ENCODE measurements at regions of chr1 and their contacts with region 1.

Region 1: DNA sequence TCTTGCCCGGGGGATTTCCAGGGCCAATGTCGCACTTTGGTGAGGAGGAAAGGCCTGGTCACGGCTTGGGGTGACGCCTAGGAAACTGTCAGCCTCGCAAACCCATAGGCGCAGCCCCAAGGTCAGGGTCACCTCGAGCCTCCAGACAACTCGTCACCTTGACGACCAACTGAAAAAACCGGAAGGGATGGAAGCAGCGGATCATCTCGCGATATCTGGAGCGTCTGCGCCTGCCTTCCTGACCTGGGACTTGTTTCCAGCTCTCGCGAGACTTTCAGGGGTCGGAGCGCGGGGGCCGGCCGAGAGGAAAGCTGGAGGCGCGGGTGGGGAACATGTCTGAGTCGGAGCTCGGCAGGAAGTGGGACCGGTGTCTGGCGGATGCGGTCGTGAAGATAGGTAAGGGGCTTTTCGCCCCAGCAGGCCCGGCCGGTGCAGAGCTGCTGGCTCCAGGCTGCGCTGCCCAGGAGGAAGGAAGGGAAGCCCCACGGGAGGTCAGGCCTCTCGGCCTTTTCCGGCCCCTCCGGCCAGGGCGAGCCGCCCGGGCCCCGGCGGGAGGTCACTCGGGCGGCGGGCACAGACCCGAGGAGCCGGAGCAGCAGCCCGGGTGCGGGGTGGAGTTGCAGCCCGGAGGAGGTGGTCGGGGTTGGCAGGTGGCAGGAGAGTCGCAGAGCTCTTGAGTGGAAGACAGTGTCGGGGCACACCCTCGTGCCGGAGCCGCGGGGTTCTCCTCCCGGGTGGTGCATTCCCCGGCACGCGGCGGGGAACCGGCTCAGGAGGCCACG is 47.2 kb upstream of the NBL1 start:
- DNase-seq: peak; percentile 92 to 100 (median 96)
- ATAC-seq: peak; percentile 69
- H3K4me3 ChIP-seq: peak overlapping the region; percentile 67 to 76
- H3K4me3 Mint-ChIP-seq: peak overlapping the region; percentile 92
- H3K27ac ChIP-seq: peak overlapping the region; percentile 96 to 99
- H3K27ac Mint-ChIP-seq: peak overlapping the region; percentile 100
- H3K4me1 ChIP-seq: peaks cover 50% of the 10 kb centered on the region
- H3K4me1 Mint-ChIP-seq: peaks cover 48% of the 10 kb centered on the region
- H3K27me3 ChIP-seq: no peaks in the 10 kb centered on the region
- H3K27me3 Mint-ChIP-seq: no peaks in the 10 kb centered on the region
- CTCF ChIP-seq: no peak

Region 2: DNA sequence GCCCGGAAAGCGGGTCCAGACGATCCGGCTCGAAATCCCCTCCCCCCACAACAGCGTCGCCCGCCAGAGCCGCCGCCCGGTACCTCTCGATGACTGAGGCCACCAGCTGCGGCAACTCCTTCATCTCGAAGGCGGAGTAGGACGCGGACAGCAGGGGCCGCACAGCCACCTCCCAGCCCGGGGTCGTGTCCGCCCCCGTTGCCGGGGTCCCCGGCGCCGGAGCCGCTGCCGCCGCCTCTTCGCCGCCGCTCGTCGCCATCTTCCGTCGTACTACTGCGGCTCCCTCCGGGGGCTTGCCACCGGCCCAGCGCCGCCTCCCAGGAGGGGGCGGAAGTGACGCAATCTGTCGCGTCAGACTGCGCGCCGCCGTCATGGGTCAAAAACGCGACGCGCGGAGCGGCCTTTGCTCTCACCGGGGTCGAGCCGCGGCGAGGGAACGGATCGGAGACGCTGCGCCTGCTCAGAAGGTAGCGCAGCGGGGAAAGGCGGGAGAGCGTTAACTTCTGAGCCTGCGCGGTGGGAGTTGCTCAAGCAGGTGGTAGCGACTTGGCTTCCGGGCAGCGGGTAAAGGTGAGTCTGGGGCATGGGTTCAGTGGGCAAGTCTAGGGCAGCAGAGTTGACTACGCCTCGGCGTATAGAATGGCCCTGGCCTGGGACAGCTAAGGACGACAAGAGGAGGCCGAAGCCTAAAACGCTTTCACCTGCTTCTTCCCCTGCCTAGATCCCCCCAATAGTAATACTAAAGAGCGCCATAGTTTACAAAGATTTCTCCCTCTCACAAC is 386.7 kb before region 1 on chr1 and contains the start of gene UBR4:
- CTCF ChIA-PET with region 1: no interaction called
- POLR2A ChIA-PET with region 1: no interaction called
- intact Hi-C with region 1: loop called (anchors 1 kb)
- DNase-seq: peak; percentile 91 to 99 (median 97)
- ATAC-seq: peak; percentile 93
- H3K4me3 ChIP-seq: peak within 1 kb of the TSS; percentile 73 to 96
- H3K4me3 Mint-ChIP-seq: peak within 1 kb of the TSS; percentile 96
- H3K27ac ChIP-seq: peak within 1 kb of the TSS; percentile 86 to 96
- H3K27ac Mint-ChIP-seq: peak within 1 kb of the TSS; percentile 99
- H3K4me1 ChIP-seq: peaks cover 48% of the 10 kb centered on the region
- H3K4me1 Mint-ChIP-seq: peaks cover 76% of the 10 kb centered on the region
- H3K27me3 ChIP-seq: no peaks in the 10 kb centered on the region
- H3K27me3 Mint-ChIP-seq: no peaks in the 10 kb centered on the region
- CTCF ChIP-seq: no peak
- total RNA-seq, gene UBR4: 146 to 148 TPM

Region 3: DNA sequence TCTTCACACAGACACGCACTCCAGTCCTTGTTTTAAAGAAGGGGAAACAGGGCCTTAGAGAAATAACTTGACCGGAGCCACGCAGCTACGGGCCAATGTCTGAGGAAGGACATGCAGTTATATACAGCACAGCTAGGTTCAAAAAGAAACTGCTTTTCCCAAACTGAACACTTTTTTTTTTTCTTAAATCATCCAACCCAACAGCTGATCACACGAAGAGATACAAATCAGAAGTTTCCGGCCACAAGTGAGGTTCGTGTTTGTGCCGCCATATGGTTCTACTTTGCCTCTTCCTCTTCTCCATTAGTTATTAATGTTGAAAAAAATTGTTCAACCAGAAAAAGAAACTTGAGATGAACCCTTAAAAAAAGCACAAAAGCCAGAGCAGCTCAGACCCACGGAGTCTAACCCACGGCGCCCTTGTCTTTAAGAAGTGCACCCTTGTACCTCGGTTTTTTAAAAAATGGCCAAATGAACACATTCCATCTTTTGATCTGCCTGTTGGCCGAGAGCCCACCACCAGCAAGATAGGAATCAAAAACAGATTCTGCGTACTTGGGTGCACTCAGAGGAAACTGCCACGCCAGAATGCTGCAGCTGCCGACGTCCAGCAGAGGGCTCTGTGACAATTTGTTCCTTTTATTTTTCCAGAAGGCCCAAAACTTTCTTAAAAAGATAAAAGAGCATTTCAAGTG is 205.9 kb before region 1 on chr1:
- CTCF ChIA-PET with region 1: interaction called, 3 read pairs
- POLR2A ChIA-PET with region 1: interaction called, 8 read pairs
- intact Hi-C with region 1: loop called in 1 of 2 experiments (anchors 5 kb)
- DNase-seq: peak; percentile 46 to 87 (median 68)
- ATAC-seq: peak; percentile 70
- H3K4me3 ChIP-seq: peak overlapping the region; percentile 34 to 38
- H3K4me3 Mint-ChIP-seq: peak overlapping the region; percentile 85
- H3K27ac ChIP-seq: peak overlapping the region; percentile 50 to 66
- H3K27ac Mint-ChIP-seq: peak overlapping the region; percentile 90
- H3K4me1 ChIP-seq: peaks cover 54% of the 10 kb centered on the region
- H3K4me1 Mint-ChIP-seq: peaks cover 77% of the 10 kb centered on the region
- H3K27me3 ChIP-seq: no peaks in the 10 kb centered on the region
- H3K27me3 Mint-ChIP-seq: no peaks in the 10 kb centered on the region
- CTCF ChIP-seq: peak; percentile 88

Region 4: DNA sequence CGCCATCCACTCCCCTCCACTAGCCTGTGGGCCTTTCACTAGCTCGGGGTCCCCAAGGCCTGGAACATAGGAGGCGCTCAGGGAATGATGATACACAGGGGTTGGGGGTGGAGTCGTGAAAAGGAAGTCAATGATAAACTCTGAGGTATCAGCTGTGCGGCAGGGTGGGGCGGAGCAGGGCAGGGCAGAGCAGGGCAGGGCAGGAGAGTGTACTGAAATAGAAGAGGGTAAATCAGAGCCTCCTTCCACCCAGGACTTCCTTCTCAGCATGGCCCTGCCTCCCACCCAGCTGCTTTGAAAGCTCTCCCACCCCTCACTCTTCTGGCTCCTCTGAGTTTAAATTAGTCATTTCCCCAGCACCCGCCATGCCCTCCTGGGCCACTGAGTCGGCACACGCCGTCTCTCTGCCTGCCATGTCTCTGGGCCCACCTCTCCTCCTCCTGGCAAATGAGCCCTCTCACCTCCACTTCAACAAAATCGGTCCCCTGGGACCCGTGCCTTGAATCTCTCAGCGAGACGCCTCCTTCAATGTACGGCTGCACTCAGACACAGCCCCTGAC is 128.4 kb before region 1 on chr1:
- CTCF ChIA-PET with region 1: interaction called, 3 read pairs
- POLR2A ChIA-PET with region 1: interaction called, 9 read pairs
- intact Hi-C with region 1: loop called (anchors 2 to 5 kb)
- DNase-seq: peak; percentile 19 to 85 (median 74)
- ATAC-seq: peak; percentile 85
- H3K4me3 ChIP-seq: peak overlapping the region in 1 of 2 experiments; percentile 41
- H3K4me3 Mint-ChIP-seq: peak overlapping the region; percentile 72
- H3K27ac ChIP-seq: peak overlapping the region; percentile 47 to 69
- H3K27ac Mint-ChIP-seq: peak overlapping the region; percentile 97
- H3K4me1 ChIP-seq: peaks cover 96% of the 10 kb centered on the region
- H3K4me1 Mint-ChIP-seq: peaks cover 91% of the 10 kb centered on the region
- H3K27me3 ChIP-seq: no peaks in the 10 kb centered on the region
- H3K27me3 Mint-ChIP-seq: no peaks in the 10 kb centered on the region
- CTCF ChIP-seq: no peak

Region 5: GRCh38 chr1:19606817-19607642 is 10.1 kb after region 1 on chr1:
- CTCF ChIA-PET with region 1: interaction called, 4 read pairs
- POLR2A ChIA-PET with region 1: interaction called, 6 read pairs
- intact Hi-C with region 1: loop called in 1 of 2 experiments (anchors 1 kb)
- DNase-seq: peak in 7 of 9 experiments; percentile 13 to 77 (median 46)
- ATAC-seq: peak; percentile 65
- H3K4me3 ChIP-seq: no peak overlapping the region
- H3K4me3 Mint-ChIP-seq: peak overlapping the region; percentile 37
- H3K27ac ChIP-seq: peak overlapping the region in 1 of 2 experiments; percentile 9
- H3K27ac Mint-ChIP-seq: peak overlapping the region; percentile 90
- H3K4me1 ChIP-seq: peaks cover 46% of the 10 kb centered on the region
- H3K4me1 Mint-ChIP-seq: peaks cover 67% of the 10 kb centered on the region
- H3K27me3 ChIP-seq: no peaks in the 10 kb centered on the region
- H3K27me3 Mint-ChIP-seq: no peaks in the 10 kb centered on the region
- CTCF ChIP-seq: no peak

Region 6: GRCh38 chr1:19643602-19644394 is 46.9 kb after region 1 on chr1 and contains the start of gene NBL1:
- CTCF ChIA-PET with region 1: no interaction called
- POLR2A ChIA-PET with region 1: interaction called, 31 read pairs
- intact Hi-C with region 1: loop called (anchors 1 kb)
- DNase-seq: peak; percentile 58 to 89 (median 77)
- ATAC-seq: peak; percentile 89
- H3K4me3 ChIP-seq: peak within 1 kb of the TSS; percentile 55 to 78
- H3K4me3 Mint-ChIP-seq: peak within 1 kb of the TSS; percentile 98
- H3K27ac ChIP-seq: peak within 1 kb of the TSS in 1 of 2 experiments; percentile 45
- H3K27ac Mint-ChIP-seq: peak within 1 kb of the TSS; percentile 95
- H3K4me1 ChIP-seq: peaks cover 32% of the 10 kb centered on the region
- H3K4me1 Mint-ChIP-seq: peaks cover 33% of the 10 kb centered on the region
- H3K27me3 ChIP-seq: peaks cover 0 to 2% of the 10 kb centered on the region in 2 experiments
- H3K27me3 Mint-ChIP-seq: peaks cover 16% of the 10 kb centered on the region
- CTCF ChIP-seq: no peak
- total RNA-seq, gene NBL1: 76.5 to 80.5 TPM